ENCODE measurements at regions of chr1 and their contacts with region 1.

Region 1: DNA sequence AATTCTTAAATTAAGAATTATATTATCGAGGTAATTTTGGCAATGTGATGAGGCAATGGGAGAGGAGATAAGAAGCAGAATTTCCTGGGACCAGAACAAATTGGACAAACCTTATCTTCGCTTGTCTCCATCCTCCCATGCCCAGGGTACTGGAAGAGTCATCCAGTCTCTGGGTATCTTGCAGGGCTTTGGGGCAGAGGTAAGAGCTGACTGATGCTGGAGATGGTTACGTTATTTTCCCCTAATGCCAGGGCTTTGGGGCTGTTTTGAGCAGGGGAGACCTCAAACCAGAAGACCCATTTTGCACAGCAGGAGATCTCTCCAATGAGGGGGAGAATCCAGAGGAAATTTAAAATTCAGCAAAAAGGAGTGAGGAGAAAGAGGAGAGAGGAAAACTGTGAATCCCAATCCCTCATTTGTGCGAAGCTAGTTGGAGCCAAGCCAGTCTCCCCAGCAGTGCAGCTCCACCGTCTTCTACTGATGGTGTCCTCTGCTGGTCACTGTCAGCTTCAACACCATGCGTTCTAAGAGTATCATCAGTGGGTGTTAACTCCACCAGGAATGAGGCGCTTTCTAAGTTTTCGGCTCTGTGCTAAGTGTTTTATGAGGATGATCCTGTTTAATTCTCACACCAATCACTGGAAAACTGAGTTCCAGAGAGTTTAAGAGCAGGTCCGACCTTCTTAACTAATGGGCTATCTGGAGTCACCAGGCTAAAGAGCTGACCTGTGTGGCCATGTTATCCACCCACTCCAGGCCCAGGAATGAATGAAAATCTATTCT is 86.8 kb upstream of the CD34 start:
- DNase-seq: peak; percentile 82
- H3K4me3 Mint-ChIP-seq: no peak overlapping the region
- H3K27ac Mint-ChIP-seq: no peak overlapping the region
- H3K4me1 Mint-ChIP-seq: no peaks in the 10 kb centered on the region
- H3K27me3 Mint-ChIP-seq: peaks cover 51% of the 10 kb centered on the region
- CTCF ChIP-seq: peak; percentile 75

Region 2: DNA sequence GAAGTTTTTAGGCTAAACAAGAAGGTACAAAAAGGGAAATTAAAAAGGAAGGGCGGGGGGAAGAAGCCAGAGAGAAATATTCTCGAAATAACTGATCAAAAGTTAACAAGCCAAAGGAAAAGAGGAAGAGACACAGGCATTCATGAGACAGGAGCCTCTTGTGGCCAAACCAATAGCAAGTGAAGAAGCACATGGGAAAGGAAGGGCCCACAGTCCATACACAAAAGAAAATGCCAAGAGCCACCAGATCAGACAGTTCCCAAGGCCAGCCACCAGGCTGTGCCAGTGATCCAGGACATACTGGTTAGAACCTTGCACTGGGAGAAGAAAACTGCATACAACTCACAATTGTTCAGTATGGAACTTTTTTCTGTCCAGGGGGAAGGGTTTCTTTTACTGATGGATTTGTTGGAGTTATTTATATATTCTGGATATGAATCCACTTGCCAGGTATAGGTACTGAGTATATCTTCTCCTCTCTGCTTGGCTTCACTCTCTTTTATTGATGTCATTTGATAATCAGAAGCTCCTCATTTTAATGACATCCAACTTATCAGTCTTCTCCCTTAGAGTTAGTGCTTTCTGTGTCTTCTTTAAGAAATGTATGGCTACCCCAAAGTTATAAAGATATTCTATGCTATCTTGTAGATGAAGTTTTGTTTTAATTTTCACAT is 169.1 kb before region 1 on chr1:
- CTCF ChIA-PET with region 1: no interaction called
- intact Hi-C with region 1: loop called (anchors 5 kb)
- DNase-seq: peak; percentile 78
- H3K4me3 Mint-ChIP-seq: no peak overlapping the region
- H3K27ac Mint-ChIP-seq: peak overlapping the region; percentile 30
- H3K4me1 Mint-ChIP-seq: peaks cover 60% of the 10 kb centered on the region
- H3K27me3 Mint-ChIP-seq: no peaks in the 10 kb centered on the region
- CTCF ChIP-seq: peak; percentile 84

Region 3: GRCh38 chr1:207897188-207897587 is 100.5 kb before region 1 on chr1:
- CTCF ChIA-PET with region 1: interaction called, 13 read pairs
- intact Hi-C with region 1: no loop called
- DNase-seq: no peak
- H3K4me3 Mint-ChIP-seq: no peak overlapping the region
- H3K27ac Mint-ChIP-seq: no peak overlapping the region
- H3K4me1 Mint-ChIP-seq: no peaks in the 10 kb centered on the region
- H3K27me3 Mint-ChIP-seq: no peaks in the 10 kb centered on the region
- CTCF ChIP-seq: peak; percentile 65

Region 4: DNA sequence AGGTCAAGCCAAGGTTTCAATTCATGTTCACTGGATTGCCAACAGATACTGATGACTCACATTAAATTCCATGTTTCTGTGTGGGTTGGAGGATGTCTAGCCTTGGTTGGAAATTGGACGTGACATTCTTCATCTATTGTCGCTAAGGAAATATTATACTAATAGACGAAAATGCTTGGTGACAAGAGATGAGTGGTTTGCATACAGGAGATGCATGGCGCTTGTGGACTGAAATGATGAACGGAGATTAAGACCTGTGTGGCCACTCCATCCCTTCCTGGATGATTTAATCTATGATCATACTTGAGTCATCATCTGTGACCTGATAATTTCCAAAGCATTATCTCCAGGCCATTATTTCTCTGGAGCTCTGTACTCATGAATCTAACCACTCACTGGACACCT is 10.3 kb after region 1 on chr1:
- CTCF ChIA-PET with region 1: interaction called, 14 read pairs
- intact Hi-C with region 1: no loop called
- DNase-seq: no peak
- H3K4me3 Mint-ChIP-seq: no peak overlapping the region
- H3K27ac Mint-ChIP-seq: peak overlapping the region; percentile 34
- H3K4me1 Mint-ChIP-seq: peaks cover 34% of the 10 kb centered on the region
- H3K27me3 Mint-ChIP-seq: no peaks in the 10 kb centered on the region
- CTCF ChIP-seq: no peak

Region 5: GRCh38 chr1:208329300-208329699 is 331.6 kb after region 1 on chr1:
- CTCF ChIA-PET with region 1: no interaction called
- intact Hi-C with region 1: no loop called
- DNase-seq: no peak
- H3K4me3 Mint-ChIP-seq: no peak overlapping the region
- H3K27ac Mint-ChIP-seq: no peak overlapping the region
- H3K4me1 Mint-ChIP-seq: no peaks in the 10 kb centered on the region
- H3K27me3 Mint-ChIP-seq: peaks cover 87% of the 10 kb centered on the region
- CTCF ChIP-seq: no peak

Measured in Calu3 (cell line).